ENCODE measurements at regions of chr12 and their contacts with region 1.

Region 1: GRCh38 chr12:95533985-95534384 is 17.3 kb downstream of the USP44 start:
- DNase-seq: no peak
- ATAC-seq: no peak
- H3K4me3 ChIP-seq: no peak overlapping the region
- H3K27ac ChIP-seq: no peak overlapping the region
- H3K4me1 ChIP-seq: peaks cover 5% of the 10 kb centered on the region; the same call in 1 of the 2 replicates
- H3K27me3 ChIP-seq: no peaks in the 10 kb centered on the region
- CTCF ChIP-seq: no peak

Region 2: DNA sequence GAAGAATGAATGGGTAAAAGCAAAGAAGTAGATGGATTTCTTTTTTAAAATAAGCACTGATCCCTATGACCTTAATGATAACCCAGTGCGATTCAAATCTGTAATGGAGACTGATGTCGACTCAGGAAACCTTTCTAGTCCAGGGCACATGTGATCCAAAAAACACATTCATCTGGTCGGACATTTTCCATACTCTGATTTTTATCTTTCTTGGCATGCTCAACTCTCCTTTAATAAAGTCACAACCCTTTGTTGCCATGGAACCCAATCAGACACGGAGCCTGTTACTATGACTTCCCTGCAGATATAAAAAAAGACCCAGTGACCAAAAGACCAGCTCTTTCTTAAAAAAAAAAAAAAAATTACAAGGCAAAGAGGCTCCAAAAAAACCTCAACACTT is 911.5 kb before region 1 on chr12:
- CTCF ChIA-PET with region 1: no interaction called
- POLR2A ChIA-PET with region 1: interaction called, 15 read pairs
- intact Hi-C with region 1: no loop called
- DNase-seq: peak; percentile 51
- ATAC-seq: no peak
- H3K4me3 ChIP-seq: peak overlapping the region; percentile 65; the same call in 1 of the 2 replicates
- H3K27ac ChIP-seq: peak overlapping the region; percentile 84
- H3K4me1 ChIP-seq: peaks cover 52% of the 10 kb centered on the region
- H3K27me3 ChIP-seq: no peaks in the 10 kb centered on the region
- CTCF ChIP-seq: no peak

Region 3: DNA sequence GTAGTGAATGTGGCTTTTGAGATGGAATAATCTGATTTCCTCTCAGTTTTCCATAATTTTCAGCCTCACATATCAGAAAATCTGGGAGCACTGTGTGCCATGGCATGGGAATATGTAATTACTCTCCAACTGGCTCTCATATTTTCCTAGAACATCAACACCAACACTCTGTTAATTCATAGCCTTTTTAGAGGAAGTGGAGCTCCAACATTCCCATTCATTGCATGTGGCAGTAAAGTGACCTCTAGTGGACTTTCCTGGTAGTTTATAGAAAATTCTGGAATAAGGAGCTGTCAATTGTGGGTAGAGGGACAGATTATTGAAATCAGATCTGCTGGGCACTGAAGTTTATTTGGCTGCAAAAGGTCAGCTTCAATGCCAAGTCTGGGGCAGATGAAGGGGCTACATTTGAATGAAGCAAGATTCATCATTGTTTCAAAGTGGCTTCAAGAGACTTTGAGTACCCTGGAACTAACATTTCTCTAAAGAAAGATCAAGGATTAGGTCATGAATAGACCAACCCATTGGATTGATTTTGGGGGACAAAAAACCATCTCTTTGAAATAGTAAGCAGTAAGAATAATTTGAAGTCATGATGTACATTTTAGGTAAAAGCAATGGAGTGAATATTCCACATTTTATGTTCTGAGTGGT is 40.9 kb after region 1 on chr12:
- CTCF ChIA-PET with region 1: interaction called, 14 read pairs
- POLR2A ChIA-PET with region 1: no interaction called
- intact Hi-C with region 1: no loop called
- DNase-seq: peak; percentile 82
- ATAC-seq: peak; percentile 86
- H3K4me3 ChIP-seq: no peak overlapping the region
- H3K27ac ChIP-seq: no peak overlapping the region
- H3K4me1 ChIP-seq: no peaks in the 10 kb centered on the region
- H3K27me3 ChIP-seq: no peaks in the 10 kb centered on the region
- CTCF ChIP-seq: peak; percentile 82